ENCODE measurements at regions of chr11 and their contacts with region 1.

Region 1: DNA sequence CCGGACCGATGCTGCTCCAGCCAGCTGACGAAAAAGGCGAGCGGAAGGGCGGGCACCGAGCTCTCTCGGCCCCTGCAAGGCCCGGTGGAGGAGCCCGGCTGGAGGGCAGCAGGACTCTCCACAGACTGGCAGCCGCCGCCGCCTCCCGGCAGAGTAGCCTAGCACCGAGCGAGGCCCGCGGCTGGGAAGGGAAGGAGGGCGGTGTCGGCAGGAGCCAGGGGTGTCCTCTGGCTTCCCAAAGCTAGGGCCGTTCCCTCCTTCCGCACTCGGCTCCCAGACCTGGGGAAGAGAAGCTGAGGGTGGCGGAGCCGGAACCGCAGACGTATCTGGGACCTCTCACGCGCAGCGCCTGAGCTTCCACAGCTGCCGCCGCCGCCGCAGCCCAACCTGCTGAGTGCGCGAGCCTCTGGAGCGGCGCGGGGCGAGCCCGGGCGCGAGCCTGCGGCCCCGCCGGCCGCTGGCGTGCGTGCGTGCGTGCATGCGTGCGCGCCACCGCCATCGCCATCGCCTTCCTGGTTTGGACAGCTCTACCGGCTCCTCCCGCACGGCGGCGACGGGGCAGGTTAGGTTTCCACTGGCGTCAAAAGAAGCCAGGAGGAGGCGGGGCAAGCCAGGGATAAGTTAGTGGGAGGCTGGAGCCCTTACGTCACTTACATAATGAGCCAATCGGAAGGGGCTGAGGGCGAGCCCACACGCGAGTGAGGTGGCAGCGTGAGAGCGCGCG is at the start of gene RAB6A:
- DNase-seq: peak; percentile 98
- H3K4me3 ChIP-seq: peak within 1 kb of the TSS; percentile 92
- H3K27me3 ChIP-seq: no peaks in the 10 kb centered on the region
- CTCF ChIP-seq: peak; percentile 36
- polyA plus RNA-seq, gene RAB6A: 73.5 and 105 TPM in 2 replicates

Region 2: GRCh38 chr11:73779084-73779902 is 18.5 kb after region 1 on chr11:
- CTCF ChIA-PET with region 1: interaction called, 10 read pairs
- POLR2A ChIA-PET with region 1: interaction called, 11 read pairs
- DNase-seq: peak; percentile 92
- H3K4me3 ChIP-seq: peak overlapping the region; percentile 54
- H3K27me3 ChIP-seq: no peaks in the 10 kb centered on the region
- CTCF ChIP-seq: no peak

Measured in BJ (cell line).